ENCODE measurements at regions of chr11 and their contacts with region 1.

Region 1: GRCh38 chr11:119196833-119197483 is 9.2 kb upstream of the CBL start:
- DNase-seq: peak; percentile 78
- H3K4me3 ChIP-seq: no peak overlapping the region
- H3K27ac ChIP-seq: no peak overlapping the region
- H3K27me3 ChIP-seq: no peaks in the 10 kb centered on the region
- CTCF ChIP-seq: peak; percentile 86

Region 2: GRCh38 chr11:118928108-118928870 is 268.7 kb before region 1 on chr11:
- CTCF ChIA-PET with region 1: no interaction called
- POLR2A ChIA-PET with region 1: no interaction called
- DNase-seq: peak; percentile 78
- H3K4me3 ChIP-seq: peak overlapping the region; percentile 74
- H3K27ac ChIP-seq: peak overlapping the region; percentile 57
- H3K27me3 ChIP-seq: no peaks in the 10 kb centered on the region
- CTCF ChIP-seq: peak; percentile 95

Region 3: DNA sequence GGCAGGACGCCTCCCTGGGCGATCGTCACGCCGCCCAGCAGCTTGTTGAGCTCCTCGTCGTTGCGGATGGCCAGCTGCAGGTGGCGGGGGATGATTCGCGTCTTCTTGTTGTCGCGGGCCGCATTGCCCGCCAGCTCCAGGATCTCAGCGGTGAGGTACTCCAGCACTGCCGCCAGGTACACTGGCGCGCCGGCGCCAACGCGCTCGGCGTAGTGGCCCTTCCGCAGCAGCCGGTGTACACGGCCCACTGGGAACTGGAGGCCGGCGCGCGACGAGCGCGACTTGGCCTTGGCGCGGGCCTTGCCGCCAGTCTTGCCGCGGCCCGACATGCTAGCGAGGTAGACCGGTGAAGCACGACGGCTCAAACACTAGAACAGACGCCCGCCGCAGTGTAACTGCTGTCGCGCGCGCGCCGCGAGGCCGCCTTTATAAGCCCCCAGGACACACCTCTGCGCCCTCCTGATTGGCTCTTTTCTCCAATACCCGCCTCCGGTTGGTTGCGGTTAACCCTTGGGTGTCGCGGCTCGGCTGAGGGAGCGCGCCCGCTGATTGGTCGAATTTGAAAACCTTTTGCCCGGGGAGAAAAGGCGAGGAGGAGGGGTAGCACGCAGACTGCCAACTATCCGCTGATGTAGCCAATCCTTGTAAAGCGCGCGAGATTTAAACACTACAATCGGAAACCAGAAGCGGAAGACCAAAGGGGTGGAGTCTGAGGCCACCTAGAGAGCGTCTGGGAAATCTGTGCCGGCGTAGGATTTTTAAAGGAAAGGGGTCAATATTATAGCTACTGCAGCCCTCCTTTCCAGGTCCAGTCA is 101.7 kb before region 1 on chr11:
- CTCF ChIA-PET with region 1: interaction called, 16 read pairs
- POLR2A ChIA-PET with region 1: interaction called, 4 read pairs
- DNase-seq: peak; percentile 100
- H3K4me3 ChIP-seq: peak overlapping the region; percentile 76
- H3K27ac ChIP-seq: peak overlapping the region; percentile 70
- H3K27me3 ChIP-seq: no peaks in the 10 kb centered on the region
- CTCF ChIP-seq: no peak

Region 4: DNA sequence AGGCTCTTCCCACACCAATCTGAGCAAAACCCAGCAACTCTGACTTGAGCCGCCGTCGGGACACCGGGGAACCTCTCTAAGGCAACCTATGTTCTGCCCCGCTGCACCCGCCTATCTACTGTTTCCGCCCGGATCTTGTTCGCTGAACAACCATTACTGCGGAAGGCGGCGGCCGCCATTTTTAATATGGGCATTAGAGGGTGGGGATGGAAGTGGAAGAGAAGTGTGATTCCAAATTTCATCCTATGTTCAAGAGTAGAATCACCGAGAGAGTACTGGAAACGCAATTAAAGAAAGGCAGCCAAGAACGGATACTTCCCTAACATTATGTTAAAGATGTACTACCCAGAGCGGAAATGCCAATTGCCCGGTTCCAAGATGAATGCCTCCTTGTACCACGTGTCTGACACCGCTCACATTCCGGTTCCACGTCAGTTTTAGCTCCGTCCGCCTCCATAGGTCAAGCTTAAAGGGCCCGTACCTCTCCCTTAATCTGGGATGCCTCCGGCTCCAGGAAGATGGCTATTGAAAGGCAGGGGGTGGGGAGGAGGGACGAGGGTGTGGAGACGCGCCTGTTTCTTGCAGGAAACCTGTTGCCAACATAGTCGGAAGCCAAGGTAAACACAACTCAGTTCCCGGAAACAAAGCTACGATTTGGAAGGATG is 95.1 kb before region 1 on chr11 and contains the start of gene DPAGT1:
- CTCF ChIA-PET with region 1: interaction called, 16 read pairs
- POLR2A ChIA-PET with region 1: no interaction called
- DNase-seq: peak; percentile 91
- H3K4me3 ChIP-seq: peak within 1 kb of the TSS; percentile 87
- H3K27ac ChIP-seq: peak within 1 kb of the TSS; percentile 93
- H3K27me3 ChIP-seq: no peaks in the 10 kb centered on the region
- CTCF ChIP-seq: no peak
- polyA plus RNA-seq, gene DPAGT1: 59.2 and 62.5 TPM in 2 replicates

Region 5: DNA sequence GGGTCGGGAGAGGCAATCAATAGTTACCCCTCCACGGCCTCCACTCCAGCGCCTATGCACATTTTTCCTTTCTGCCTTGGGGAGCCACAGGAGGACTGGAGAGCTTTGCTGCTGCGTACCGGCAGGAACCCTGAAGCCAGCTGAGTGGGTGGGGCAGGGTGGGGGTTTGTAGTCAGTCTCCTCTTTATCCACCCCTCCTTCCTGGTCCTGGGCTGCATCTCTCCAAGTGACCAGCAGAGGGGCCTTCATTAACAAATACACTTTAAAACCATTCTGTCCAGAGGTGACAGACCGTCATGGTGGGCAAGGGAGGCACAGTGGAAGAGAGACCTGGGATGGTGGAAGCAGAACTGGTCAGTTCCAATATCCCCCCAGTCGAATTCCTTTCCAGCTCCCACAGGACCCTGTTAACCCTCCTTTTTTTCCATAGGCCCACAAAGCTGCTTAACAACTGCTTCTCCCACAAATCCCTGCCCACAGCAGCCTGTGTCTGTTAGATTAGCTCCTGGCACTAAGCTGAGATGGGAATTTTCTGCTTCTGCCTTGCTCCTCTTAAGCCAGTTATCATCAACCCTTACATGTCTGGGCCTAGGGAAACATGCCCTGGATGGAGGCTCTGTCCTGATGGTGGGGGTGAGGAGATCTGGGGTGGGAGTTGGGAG is 52.0 kb before region 1 on chr11:
- CTCF ChIA-PET with region 1: interaction called, 24 read pairs
- POLR2A ChIA-PET with region 1: no interaction called
- DNase-seq: peak; percentile 32
- H3K4me3 ChIP-seq: no peak overlapping the region
- H3K27ac ChIP-seq: no peak overlapping the region
- H3K27me3 ChIP-seq: peaks cover 26% of the 10 kb centered on the region
- CTCF ChIP-seq: peak; percentile 72

Region 6: GRCh38 chr11:119168471-119169281 is 28.3 kb before region 1 on chr11 and contains the start of gene NLRX1:
- CTCF ChIA-PET with region 1: interaction called, 19 read pairs
- POLR2A ChIA-PET with region 1: interaction called, 12 read pairs
- DNase-seq: peak; percentile 39
- H3K4me3 ChIP-seq: peak within 1 kb of the TSS; percentile 64
- H3K27ac ChIP-seq: peak within 1 kb of the TSS; percentile 52
- H3K27me3 ChIP-seq: no peaks in the 10 kb centered on the region
- CTCF ChIP-seq: peak; percentile 85
- polyA plus RNA-seq, gene NLRX1: 4.7 and 6.4 TPM in 2 replicates

Region 7: GRCh38 chr11:119175493-119176077 is 21.4 kb before region 1 on chr11:
- CTCF ChIA-PET with region 1: interaction called, 11 read pairs
- POLR2A ChIA-PET with region 1: no interaction called
- DNase-seq: no peak
- H3K4me3 ChIP-seq: no peak overlapping the region
- H3K27ac ChIP-seq: no peak overlapping the region
- H3K27me3 ChIP-seq: no peaks in the 10 kb centered on the region
- CTCF ChIP-seq: no peak

Region 8: DNA sequence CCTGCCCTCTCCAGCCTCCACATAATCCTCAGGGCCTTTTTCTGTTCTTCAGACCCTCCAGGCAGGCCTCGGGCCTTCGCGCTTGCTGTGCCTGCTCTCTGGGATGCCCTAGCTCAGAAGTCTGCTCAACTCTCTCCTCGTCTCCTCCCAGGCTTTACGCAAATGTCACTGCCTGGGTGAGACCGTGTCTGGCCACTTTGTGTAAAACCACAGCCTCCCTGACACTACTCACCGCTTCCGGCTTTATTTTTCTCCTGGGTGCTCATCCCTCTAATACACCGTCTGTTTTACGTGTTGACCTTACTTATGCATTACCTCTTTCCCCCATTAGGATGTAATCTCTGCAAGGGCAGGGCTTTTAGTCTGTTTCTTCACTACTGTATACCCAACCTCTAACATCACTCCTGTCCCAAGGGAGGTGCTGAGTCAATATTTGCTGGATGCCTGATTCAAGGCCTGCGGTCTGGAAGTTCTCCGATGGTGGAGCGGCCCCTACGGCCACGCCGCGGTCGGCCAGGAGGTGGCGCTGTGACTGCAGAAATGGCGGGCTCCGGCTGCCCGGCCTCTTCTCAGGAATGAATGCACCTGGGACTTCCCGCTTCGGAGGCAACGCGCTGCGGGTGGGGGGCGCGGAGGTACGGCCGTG is 284.2 kb after region 1 on chr11:
- CTCF ChIA-PET with region 1: no interaction called
- POLR2A ChIA-PET with region 1: no interaction called
- DNase-seq: peak; percentile 65
- H3K4me3 ChIP-seq: no peak overlapping the region
- H3K27ac ChIP-seq: no peak overlapping the region
- H3K27me3 ChIP-seq: peaks cover 37% of the 10 kb centered on the region
- CTCF ChIP-seq: peak; percentile 96